GM18951 (cell line): ENCODE measurements at regions of chr14 and their contacts with region 1.

Region 1: DNA sequence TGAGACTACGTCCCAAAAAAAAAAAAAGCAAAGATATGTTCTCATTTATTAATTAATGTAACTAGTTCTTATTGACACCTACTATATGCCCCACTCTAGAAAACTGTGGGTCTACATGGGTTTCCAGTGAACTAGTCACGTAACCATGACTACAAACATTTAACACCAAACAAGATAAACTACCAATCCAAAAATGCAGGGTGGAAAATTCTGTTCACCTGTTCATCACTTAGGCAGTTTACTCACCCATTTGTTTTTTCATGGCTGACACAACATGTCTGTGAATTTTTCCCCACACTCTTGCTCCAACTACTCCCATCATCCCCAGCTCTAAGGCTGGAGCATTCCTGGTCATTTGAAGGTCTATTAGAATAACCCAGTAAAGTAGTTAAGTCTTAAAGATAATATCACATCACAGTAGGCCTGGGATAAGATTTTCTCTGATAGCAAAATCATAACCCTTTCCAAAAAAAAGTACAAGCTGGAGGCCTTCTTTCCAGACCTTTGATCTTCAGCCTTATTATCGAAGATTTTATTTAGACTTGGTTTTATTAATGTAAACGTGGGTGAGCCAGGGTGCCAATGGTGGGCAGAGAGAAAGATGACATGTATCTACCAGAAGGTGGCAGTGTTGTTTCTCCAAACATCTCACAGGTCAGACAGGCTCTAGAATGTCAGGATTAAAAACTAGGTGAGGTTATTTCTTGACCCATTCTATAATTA is 61.6 kb upstream of the DAAM1 start:
- POLR2A ChIP-seq: no peak

Region 2: DNA sequence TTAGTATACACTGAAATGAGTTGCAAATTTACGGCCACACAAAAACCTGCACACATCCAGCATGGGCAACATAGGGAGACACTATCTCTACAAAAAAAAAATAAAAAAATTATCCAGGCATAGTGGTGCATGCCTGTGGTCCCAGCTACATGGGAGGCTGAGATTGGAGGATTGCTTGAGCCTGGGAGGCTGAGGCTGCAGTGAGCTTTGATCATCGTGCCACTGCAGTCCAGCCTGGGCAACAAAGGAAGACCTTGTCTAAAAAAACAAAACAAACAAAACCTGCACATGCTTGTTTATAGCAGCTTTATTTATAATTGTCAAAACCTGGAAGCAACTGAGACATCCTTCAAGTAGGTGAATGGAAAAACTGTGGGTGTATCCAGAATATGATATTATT is 736.0 kb before region 1 on chr14:
- in situ Hi-C with region 1: no loop called
- POLR2A ChIP-seq: no peak

Region 3: GRCh38 chr14:58597041-58597440 is 529.8 kb before region 1 on chr14:
- in situ Hi-C with region 1: no loop called
- POLR2A ChIP-seq: no peak

Region 4: GRCh38 chr14:58826845-58827686 is 299.8 kb before region 1 on chr14:
- in situ Hi-C with region 1: no loop called
- POLR2A ChIP-seq: no peak

Region 5: GRCh38 chr14:59055439-59056045 is 71.3 kb before region 1 on chr14:
- in situ Hi-C with region 1: no loop called
- POLR2A ChIP-seq: no peak

Region 6: DNA sequence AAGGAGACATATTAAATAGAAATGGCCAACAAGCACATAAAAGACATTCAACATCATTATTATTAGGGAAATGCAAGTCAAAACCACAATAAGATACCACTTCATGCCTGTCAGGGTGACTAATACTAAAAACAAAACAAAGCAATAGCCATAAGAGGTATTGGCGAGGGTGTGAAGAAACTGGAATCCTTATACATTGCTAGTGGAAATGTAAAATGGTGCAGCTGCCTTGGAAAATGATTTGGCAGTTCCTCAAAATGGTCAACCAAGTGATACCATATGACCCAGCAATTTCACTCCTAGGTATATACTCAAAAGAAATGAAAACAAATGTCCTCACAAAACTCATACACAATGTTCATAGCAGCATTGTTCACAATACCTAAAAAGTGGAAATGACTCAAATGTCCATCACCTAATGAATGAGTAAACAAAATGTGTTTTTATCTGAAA is 311.4 kb after region 1 on chr14:
- in situ Hi-C with region 1: loop called (anchors 5 kb)
- POLR2A ChIP-seq: no peak